IMR-90 (cell line): ENCODE measurements at regions of chr5 and their contacts with region 1.

Region 1: DNA sequence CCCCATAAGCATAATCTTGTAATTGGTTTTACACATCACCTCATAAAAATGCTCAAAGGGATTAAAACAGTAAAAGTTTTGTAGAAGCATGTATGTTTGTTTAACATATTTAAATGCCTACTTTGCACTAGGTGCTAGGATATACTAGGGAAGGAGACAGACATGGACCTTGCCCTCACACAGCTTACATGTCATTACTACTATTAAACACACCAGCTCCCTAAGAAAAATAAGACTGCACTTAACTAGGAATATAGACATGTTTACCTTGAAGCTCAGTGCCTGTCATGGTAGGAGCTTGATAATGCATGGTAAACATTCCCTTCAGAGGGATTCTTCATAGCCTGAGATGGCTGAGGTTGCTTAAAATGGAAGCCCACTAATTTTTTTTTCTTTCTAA is 6.2 kb downstream of the SHLD3 start:
- DNase-seq: no peak
- ATAC-seq: no peak
- H3K4me3 ChIP-seq: no peak overlapping the region
- H3K27ac ChIP-seq: no peak overlapping the region
- H3K4me1 ChIP-seq: no peaks in the 10 kb centered on the region
- H3K27me3 ChIP-seq: no peaks in the 10 kb centered on the region
- CTCF ChIP-seq: no peak
- POLR2A ChIP-seq: no peak
- RAD21 ChIP-seq: no peak

Region 2: DNA sequence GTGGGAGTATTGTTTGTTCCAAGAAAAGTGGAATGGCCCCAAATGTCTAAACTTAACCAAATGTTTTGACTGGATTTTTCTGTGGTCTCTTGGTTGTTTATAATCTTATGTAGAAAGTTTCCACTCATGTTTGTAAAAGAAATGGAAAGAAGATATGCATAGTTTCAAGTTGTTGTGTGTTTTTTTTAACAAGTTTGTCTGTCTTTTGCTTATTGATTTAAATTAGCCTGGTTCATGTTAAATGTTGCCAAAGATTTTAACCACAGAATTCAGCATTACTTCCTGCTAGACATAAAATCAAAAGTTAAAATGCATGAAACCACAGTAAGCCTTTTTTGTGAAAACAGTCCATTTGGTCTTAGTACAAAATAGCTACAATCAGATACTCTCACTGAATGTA is 53.8 kb before region 1 on chr5:
- CTCF ChIA-PET with region 1: no interaction called
- POLR2A ChIA-PET with region 1: no interaction called
- dilution Hi-C with region 1: no loop called
- in situ Hi-C with region 1: no loop called
- intact Hi-C with region 1: no loop called
- DNase-seq: peak; percentile 45
- ATAC-seq: peak; percentile 66
- H3K4me3 ChIP-seq: no peak overlapping the region
- H3K27ac ChIP-seq: no peak overlapping the region
- H3K4me1 ChIP-seq: no peaks in the 10 kb centered on the region
- H3K27me3 ChIP-seq: no peaks in the 10 kb centered on the region
- CTCF ChIP-seq: no peak
- POLR2A ChIP-seq: no peak
- RAD21 ChIP-seq: no peak

Region 3: DNA sequence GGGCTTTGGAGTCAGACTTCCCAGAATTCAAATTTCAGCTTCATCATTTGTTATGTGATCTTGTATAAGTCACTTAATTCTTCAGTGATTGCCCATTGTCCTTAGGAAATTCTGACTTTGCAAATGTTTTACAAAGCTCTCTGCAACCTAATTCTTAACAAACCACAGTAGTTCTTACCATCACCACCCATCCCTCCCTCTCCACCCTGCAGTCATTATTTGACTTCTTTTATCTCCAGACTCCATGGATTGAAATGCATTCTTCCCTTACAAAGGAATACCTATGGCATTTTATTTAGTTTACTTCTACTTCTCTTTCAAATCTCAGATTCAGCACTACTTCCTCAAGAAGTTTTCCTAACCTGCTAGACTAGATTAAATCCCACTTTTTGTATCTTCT is 17.0 kb after region 1 on chr5:
- CTCF ChIA-PET with region 1: no interaction called
- POLR2A ChIA-PET with region 1: interaction called, 12 read pairs
- dilution Hi-C with region 1: no loop called
- in situ Hi-C with region 1: no loop called
- intact Hi-C with region 1: no loop called
- DNase-seq: no peak
- ATAC-seq: no peak
- H3K4me3 ChIP-seq: no peak overlapping the region
- H3K27ac ChIP-seq: no peak overlapping the region
- H3K4me1 ChIP-seq: no peaks in the 10 kb centered on the region; the same call in 1 of the 2 replicates
- H3K27me3 ChIP-seq: no peaks in the 10 kb centered on the region
- CTCF ChIP-seq: no peak
- POLR2A ChIP-seq: no peak
- RAD21 ChIP-seq: no peak